ENCODE measurements at regions of chr22 and their contacts with region 1.

Region 1: DNA sequence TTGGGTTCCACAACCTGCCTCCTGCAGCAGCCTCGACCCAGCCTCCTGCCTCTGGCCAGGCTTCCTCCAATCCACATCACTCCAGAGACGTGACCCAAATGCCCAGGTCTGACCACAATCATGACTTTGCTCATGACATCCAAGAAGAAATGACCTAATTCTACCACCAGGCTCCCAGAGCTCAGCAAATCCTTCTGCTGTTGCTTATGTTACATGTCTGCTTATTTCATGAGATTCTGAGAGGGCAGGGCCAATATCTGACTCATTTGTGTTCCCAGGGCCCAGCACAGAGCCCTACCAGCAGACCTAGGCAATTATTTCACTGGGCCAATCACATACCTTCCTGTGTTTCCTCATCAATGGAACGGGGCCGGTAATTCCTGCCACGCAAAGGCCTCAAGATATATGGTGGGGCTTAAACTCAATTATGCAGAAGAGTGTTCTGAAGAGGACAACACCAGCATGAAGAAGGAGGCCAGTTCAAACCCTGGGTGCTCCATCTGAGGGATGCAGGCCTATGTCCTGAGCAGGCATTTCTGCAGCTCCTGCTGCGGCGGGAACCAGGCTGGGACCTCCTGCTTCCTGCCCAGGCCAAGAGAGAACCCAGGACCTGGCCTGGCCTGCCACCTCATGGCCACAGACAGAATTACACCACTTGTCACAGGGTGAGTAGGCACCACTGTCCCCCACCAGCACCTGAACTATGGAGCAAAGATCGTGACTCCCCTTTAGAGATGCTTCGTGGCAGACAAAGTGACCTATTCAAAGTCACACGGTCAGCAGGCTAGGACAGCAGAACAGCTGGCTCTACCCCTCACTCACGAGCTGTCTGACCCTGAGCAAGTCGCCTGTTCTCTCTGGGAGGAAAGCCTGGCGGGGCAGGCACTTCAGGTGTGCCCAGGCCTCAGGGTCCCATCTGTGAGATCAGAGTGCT is 5.9 kb downstream of the CENPM start:
- DNase-seq: peak; percentile 76 to 93 (median 86)
- ATAC-seq: peak; percentile 65
- H3K4me3 ChIP-seq: peak overlapping the region in 1 of 2 experiments; percentile 15
- H3K4me3 Mint-ChIP-seq: peak overlapping the region; percentile 36
- H3K27ac ChIP-seq: peak overlapping the region; percentile 83 to 96
- H3K27ac Mint-ChIP-seq: peak overlapping the region; percentile 98
- H3K4me1 ChIP-seq: peaks cover 29% of the 10 kb centered on the region
- H3K4me1 Mint-ChIP-seq: peaks cover 35% of the 10 kb centered on the region
- H3K27me3 ChIP-seq: no peaks in the 10 kb centered on the region
- H3K27me3 Mint-ChIP-seq: no peaks in the 10 kb centered on the region
- CTCF ChIP-seq: peak; percentile 98

Region 2: GRCh38 chr22:41596776-41597634 is 344.1 kb before region 1 on chr22:
- CTCF ChIA-PET with region 1: no interaction called
- POLR2A ChIA-PET with region 1: no interaction called
- intact Hi-C with region 1: no loop called
- DNase-seq: peak in 6 of 9 experiments; percentile 4 to 53 (median 36)
- ATAC-seq: peak; percentile 64
- H3K4me3 ChIP-seq: no peak overlapping the region
- H3K4me3 Mint-ChIP-seq: no peak overlapping the region
- H3K27ac ChIP-seq: no peak overlapping the region
- H3K27ac Mint-ChIP-seq: no peak overlapping the region
- H3K4me1 ChIP-seq: no peaks in the 10 kb centered on the region
- H3K4me1 Mint-ChIP-seq: peaks cover 2% of the 10 kb centered on the region
- H3K27me3 ChIP-seq: no peaks in the 10 kb centered on the region
- H3K27me3 Mint-ChIP-seq: no peaks in the 10 kb centered on the region
- CTCF ChIP-seq: peak; percentile 45

Region 3: DNA sequence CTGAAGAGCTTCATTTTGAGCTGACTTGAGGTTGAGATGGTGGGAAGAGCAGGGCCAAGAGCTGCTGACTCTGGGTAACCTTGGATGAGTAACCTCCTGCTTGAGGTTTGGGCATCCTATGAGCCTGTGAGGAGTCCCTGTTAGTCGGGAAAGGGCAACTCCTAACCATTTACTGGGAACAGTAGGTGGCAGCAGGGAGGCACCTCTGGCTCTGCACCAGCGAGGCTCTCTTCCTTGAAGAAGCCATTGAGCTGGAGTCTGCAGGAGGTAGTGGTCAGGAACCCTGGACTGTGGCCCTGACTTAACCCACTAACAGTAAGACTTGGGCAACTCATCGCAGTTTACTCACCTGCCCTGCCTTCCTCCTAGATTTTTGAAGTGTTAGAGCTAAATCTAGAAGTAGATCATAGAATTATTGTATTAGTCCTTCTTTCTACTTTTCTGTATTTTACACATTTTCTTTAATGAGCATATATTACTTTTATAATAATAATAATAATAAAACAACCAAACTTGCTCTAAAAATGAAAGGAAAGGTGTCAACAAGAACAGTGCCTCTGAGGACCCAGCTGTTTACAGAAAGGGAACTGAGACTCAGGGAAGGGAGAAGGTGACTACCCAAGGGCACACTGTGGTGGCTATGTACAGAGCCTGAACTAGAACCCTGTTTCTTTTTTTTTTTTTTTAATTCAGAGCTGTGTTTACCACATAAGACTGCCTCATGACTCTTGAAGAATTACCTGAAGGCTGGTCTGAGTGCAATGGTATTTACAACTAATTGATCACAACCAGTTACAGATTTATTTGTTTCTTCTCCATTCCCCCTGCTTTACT is 194.3 kb before region 1 on chr22:
- CTCF ChIA-PET with region 1: interaction called, 74 read pairs
- POLR2A ChIA-PET with region 1: interaction called, 13 read pairs
- intact Hi-C with region 1: loop called in 1 of 2 experiments (anchors 1 kb)
- DNase-seq: peak; percentile 3 to 78 (median 55)
- ATAC-seq: peak; percentile 71
- H3K4me3 ChIP-seq: no peak overlapping the region
- H3K4me3 Mint-ChIP-seq: no peak overlapping the region
- H3K27ac ChIP-seq: no peak overlapping the region
- H3K27ac Mint-ChIP-seq: no peak overlapping the region
- H3K4me1 ChIP-seq: no peaks in the 10 kb centered on the region
- H3K4me1 Mint-ChIP-seq: peaks cover 4% of the 10 kb centered on the region
- H3K27me3 ChIP-seq: no peaks in the 10 kb centered on the region
- H3K27me3 Mint-ChIP-seq: peaks cover 13% of the 10 kb centered on the region
- CTCF ChIP-seq: peak; percentile 43

Region 4: DNA sequence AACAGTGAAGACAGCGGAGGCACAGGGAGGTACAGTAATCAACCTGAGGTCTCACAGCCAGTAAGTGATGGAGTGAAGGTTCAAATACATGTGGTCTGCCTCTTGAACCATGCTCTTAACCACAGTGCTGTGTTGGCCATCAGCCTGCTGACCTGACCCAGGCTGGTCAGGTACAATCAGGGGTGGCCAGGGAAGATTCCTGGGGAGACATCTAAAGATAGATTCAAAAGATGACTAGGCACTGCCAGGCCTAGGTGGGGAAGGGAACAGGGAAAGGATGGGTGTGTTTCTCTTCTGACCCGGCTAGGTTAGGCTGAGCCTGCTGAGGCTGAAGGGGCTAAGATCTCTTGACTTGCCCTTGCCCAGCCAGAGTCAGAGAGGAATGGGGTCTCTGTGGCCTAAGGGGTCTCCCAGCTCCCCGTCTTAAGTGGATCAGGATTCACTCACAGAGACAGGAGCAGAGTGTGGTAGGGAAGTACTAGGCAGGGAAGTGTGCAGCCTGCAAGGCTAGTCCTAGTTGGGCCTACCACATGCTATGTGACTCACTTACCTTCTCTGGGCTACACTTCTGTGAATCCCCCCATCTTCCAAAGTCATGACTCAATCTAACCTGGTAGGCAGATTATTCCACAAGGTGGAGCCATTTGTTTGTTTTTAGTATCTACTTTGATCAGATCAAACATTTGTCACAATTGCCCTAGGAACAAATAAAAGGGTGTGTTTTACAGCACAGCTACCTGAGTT is 118.6 kb before region 1 on chr22:
- CTCF ChIA-PET with region 1: interaction called, 44 read pairs
- POLR2A ChIA-PET with region 1: interaction called, 7 read pairs
- intact Hi-C with region 1: loop called (anchors 1 kb)
- DNase-seq: peak in 5 of 9 experiments; percentile 21 to 88 (median 48)
- ATAC-seq: peak; percentile 95
- H3K4me3 ChIP-seq: no peak overlapping the region
- H3K4me3 Mint-ChIP-seq: no peak overlapping the region
- H3K27ac ChIP-seq: no peak overlapping the region
- H3K27ac Mint-ChIP-seq: peak overlapping the region; percentile 72
- H3K4me1 ChIP-seq: no peaks in the 10 kb centered on the region
- H3K4me1 Mint-ChIP-seq: peaks cover 8% of the 10 kb centered on the region
- H3K27me3 ChIP-seq: no peaks in the 10 kb centered on the region
- H3K27me3 Mint-ChIP-seq: no peaks in the 10 kb centered on the region
- CTCF ChIP-seq: peak; percentile 57

Region 5: GRCh38 chr22:41857155-41857859 is 83.8 kb before region 1 on chr22:
- CTCF ChIA-PET with region 1: interaction called, 21 read pairs
- POLR2A ChIA-PET with region 1: interaction called, 3 read pairs
- intact Hi-C with region 1: loop called (anchors 1 kb)
- DNase-seq: peak; percentile 31 to 91 (median 72)
- ATAC-seq: peak; percentile 70
- H3K4me3 ChIP-seq: no peak overlapping the region
- H3K4me3 Mint-ChIP-seq: no peak overlapping the region
- H3K27ac ChIP-seq: peak overlapping the region; percentile 20 to 67
- H3K27ac Mint-ChIP-seq: peak overlapping the region; percentile 84
- H3K4me1 ChIP-seq: peaks cover 30% of the 10 kb centered on the region
- H3K4me1 Mint-ChIP-seq: peaks cover 59% of the 10 kb centered on the region
- H3K27me3 ChIP-seq: no peaks in the 10 kb centered on the region
- H3K27me3 Mint-ChIP-seq: no peaks in the 10 kb centered on the region
- CTCF ChIP-seq: peak; percentile 76

Region 6: DNA sequence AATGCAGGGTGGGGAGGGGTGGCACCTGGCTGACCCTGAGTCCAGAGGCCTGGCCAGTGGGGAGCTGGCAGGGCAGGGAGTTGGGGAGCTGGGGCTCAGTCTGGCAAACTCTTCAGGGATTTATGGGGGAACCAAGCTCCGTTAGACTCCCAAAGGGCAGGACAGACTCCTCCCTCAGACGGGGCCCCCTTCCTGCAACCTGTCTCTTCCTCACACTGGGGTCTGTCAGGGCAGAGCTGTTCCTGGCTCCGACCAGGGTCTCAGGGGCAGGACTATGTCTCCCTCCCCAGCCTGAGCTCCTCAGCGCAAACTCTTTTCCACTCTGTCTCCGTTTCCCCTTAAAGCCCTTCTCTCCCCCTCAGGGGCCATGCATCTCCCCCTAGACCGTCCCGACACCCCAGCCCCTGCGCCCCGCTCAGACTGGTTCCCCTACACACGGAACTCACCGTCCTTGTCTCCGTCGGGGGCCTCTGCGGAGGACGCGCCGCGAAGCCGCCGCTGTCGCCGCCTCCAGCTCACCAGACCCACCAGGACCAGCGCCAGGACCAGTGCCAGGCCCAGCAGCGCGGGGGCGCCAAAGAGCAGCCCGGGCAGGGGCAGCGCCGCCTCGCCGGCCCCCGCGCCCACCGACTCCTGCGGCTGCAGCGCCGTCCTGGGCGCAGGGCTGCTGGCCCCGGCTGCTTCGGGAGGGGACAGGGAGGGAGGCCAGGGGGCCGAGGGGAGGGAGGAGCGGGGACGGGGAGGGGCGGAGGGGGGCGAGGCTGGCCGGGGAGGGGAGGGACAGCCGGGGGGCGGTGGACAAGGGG is 15.2 kb before region 1 on chr22:
- CTCF ChIA-PET with region 1: interaction called, 105 read pairs
- POLR2A ChIA-PET with region 1: interaction called, 71 read pairs
- intact Hi-C with region 1: loop called (anchors 1 kb)
- DNase-seq: peak; percentile 61 to 86 (median 80)
- ATAC-seq: peak; percentile 75
- H3K4me3 ChIP-seq: peak overlapping the region; percentile 43 to 57
- H3K4me3 Mint-ChIP-seq: peak overlapping the region; percentile 85
- H3K27ac ChIP-seq: no peak overlapping the region
- H3K27ac Mint-ChIP-seq: peak overlapping the region; percentile 69
- H3K4me1 ChIP-seq: peaks cover 18% of the 10 kb centered on the region
- H3K4me1 Mint-ChIP-seq: peaks cover 25% of the 10 kb centered on the region
- H3K27me3 ChIP-seq: peaks cover 0 to 3% of the 10 kb centered on the region in 2 experiments
- H3K27me3 Mint-ChIP-seq: no peaks in the 10 kb centered on the region
- CTCF ChIP-seq: peak; percentile 88